Posterior vena cava (tissue), 2 donors: ENCODE measurements at regions of chr10 and their contacts with region 1.

Region 1: GRCh38 chr10:132536971-132537712 is 445 bp upstream of the INPP5A start:
- DNase-seq: peak; percentile 100

Region 2: DNA sequence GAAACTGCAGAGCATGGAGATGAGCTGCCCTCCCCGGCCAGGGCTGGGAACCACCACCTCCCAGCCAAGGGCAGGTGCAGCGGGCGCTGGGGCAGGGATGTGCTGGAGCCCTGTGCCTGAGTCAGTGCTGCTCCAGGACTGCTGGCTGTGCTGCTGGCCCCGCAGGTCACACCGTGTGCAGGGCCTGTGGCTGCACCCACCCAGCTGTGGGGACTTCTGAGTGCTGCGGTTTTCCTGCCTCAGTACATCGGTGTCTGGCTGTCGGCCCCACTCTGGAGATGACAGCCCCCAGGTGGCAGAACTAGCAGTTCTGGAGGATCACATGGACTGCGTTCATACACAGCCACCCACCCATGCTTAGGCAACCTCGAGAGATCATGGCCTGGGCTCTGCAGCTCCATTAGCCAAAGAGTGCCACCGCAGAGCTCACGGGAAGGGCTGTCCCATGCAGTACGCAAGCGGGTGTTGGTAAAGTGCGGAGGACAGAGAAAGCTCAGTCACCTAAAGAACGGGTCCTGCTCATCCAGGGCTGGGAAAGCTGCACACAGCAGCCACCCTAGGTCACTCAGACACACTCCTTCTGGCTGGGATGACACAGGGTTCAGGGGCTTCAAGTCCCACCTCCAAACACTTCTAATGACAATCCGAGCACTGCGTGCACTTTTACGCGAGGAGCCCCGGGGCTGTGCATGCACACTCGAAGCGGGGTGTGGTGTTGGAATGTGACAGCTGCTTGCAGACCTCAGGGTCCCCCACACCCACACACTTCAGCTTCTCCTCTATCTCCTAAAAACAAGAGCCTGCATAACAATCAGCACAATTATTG is 834.4 kb before region 1 on chr10:
- intact Hi-C with region 1: loop called in 1 of 2 experiments (anchors 10 kb)
- DNase-seq: peak; percentile 53

Region 3: DNA sequence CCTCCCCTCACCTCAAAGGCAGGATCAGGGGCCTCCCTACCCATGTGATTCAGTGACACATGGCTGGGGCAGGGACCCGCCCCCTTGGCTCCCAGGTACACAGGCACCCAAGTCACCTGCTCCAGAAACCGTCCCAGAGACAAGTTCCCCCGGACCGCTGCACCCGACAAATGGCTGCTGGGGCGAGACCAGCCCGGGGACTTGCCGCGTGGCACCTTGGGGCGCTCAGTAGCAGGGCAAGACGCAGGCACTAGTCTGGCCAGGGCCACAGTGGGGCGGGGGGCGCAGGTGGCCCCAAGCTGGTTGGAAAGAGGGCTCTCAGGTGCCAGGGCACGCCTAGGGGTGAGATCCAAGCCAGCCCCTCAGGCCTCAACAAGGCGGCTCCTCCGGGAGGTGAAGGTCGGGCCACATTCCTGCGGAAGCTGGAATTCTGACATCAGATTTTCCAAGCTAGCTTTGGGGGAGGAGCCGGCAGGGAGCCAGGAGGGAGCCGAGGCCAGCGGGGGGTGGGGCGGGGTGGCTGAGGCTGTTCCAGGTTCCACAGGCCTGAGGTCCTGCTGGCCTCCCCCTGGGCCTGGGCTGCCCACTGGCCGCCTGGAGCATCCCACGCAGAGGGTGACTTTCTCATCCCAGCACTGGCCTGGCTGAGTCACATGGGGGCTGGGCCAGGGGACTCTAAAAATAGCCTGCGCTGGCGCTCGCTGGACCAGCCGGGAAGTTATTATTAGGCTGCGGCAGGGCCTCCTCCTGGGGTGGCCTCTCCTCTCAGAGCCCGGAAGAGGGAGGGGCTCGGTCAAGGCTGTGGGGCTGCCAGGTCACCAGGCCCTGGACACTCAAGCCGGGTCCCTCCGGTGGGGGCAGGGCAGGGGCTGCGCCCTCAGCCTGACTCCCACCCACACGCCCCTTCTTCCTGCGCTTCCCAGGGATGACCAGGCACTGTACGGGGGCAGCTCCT is 20.1 kb before region 1 on chr10:
- intact Hi-C with region 1: loop called in 1 of 2 experiments (anchors 1 kb)
- DNase-seq: peak; percentile 98

Region 4: DNA sequence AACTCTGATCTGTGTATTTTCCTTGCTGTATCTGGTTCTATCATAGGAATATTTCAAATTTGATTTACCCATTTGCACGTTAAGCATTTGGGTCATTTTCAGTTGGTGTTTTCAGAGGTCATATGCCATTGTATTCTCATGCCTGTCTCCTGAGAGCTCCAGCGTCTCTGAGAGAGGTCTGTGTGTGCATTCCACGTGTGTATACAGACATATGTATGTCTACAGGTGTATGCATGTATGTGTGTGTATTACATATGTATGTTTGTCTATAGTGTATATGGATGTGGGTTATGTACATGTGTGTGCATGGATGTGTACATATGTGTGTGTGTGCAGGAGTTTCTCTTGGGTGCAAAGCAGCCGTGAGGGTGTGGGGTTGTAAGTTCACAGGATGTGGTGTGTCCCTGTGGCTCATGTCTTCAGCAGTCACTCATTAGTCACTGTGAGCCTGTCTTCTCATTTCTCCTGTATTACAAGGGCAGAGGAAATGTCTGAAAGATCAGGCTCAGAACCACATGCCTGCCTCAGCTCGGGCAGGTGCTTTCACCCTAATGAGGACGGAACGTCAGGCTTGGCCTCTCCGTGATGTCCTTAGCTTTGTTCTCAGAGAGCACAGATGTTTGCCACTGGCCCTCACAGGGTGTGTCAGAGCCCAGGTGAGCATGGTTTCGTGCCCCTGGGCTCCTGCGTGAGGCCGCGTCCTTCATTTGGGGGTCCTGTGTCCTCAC is 147.2 kb after region 1 on chr10:
- intact Hi-C with region 1: no loop called
- DNase-seq: peak; percentile 34